Endothelial cell of umbilical vein (primary cell): ENCODE measurements at regions of chr11 and their contacts with region 1.

Region 1: DNA sequence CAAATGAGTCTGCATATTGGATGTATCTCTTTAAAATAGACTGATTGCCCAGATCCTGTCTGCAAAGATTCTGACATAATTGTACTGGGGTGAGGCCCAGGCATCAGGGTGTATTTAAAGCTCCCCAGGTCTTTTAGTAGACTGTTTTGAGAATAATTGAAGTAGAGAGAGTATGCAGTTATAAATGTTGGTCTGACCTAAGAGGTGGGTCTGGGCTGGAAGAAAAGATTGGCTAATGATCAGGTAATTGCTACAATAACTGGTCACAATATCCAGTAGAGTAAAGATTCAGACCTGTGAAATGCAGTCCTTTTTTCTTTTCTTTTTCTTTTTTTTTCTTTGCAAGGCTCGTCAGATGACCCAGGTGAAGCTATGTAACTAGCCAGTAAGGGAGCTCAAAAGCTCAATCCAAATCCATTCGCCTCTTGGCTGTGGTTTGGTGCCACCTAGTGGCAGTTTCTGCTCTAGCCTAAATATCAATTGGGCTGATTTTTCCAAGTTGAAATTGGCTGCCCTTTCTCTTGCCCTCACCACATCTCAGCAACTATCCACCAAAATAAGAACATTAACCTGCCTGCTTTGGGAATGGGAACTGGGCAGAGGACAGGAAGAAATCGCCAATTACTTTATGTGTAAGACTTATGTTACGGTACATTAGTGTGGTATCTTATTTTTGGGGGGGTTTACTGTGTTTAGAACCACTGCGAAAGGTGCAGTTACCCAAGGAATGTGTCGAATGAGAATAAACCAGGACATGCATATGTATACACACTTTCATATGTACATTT is 45.9 kb downstream of the ZNF143 start:
- DNase-seq: peak; percentile 84
- H3K4me3 ChIP-seq: no peak overlapping the region
- H3K27ac ChIP-seq: no peak overlapping the region
- H3K4me1 ChIP-seq: no peaks in the 10 kb centered on the region
- H3K27me3 ChIP-seq: no peaks in the 10 kb centered on the region
- CTCF ChIP-seq: peak; percentile 69 to 88
- POLR2A ChIP-seq: no peak

Region 2: GRCh38 chr11:8911029-8911826 is 595.5 kb before region 1 on chr11 and contains the start of gene AKIP1:
- CTCF ChIA-PET with region 1: interaction called, 16 read pairs
- POLR2A ChIA-PET with region 1: no interaction called
- dilution Hi-C with region 1: no loop called
- intact Hi-C with region 1: loop called (anchors 2 kb)
- DNase-seq: peak; percentile 98
- H3K4me3 ChIP-seq: peak within 1 kb of the TSS; percentile 63 to 95 (median 82)
- H3K27ac ChIP-seq: peak within 1 kb of the TSS; percentile 63
- H3K4me1 ChIP-seq: peaks cover 32% of the 10 kb centered on the region
- H3K27me3 ChIP-seq: no peaks in the 10 kb centered on the region
- CTCF ChIP-seq: no peak
- POLR2A ChIP-seq: peak; percentile 42
- total RNA-seq, gene AKIP1: 21.9 and 23.4 TPM in 2 replicates

Region 3: GRCh38 chr11:8934749-8935478 is 571.8 kb before region 1 on chr11:
- CTCF ChIA-PET with region 1: no interaction called
- POLR2A ChIA-PET with region 1: no interaction called
- dilution Hi-C with region 1: no loop called
- intact Hi-C with region 1: no loop called
- DNase-seq: no peak
- H3K4me3 ChIP-seq: no peak overlapping the region
- H3K27ac ChIP-seq: no peak overlapping the region
- H3K4me1 ChIP-seq: peaks cover 7% of the 10 kb centered on the region
- H3K27me3 ChIP-seq: no peaks in the 10 kb centered on the region
- CTCF ChIP-seq: no peak
- POLR2A ChIP-seq: no peak

Region 4: GRCh38 chr11:9137293-9138132 is 369.2 kb before region 1 on chr11:
- CTCF ChIA-PET with region 1: interaction called, 47 read pairs
- POLR2A ChIA-PET with region 1: no interaction called
- dilution Hi-C with region 1: no loop called
- intact Hi-C with region 1: no loop called
- DNase-seq: peak; percentile 85
- H3K4me3 ChIP-seq: no peak overlapping the region
- H3K27ac ChIP-seq: peak overlapping the region; percentile 75
- H3K4me1 ChIP-seq: peaks cover 37% of the 10 kb centered on the region
- H3K27me3 ChIP-seq: no peaks in the 10 kb centered on the region
- CTCF ChIP-seq: peak; percentile 90 to 99
- POLR2A ChIP-seq: no peak

Region 5: GRCh38 chr11:9448576-9449352 is 57.9 kb before region 1 on chr11:
- CTCF ChIA-PET with region 1: interaction called, 5 read pairs
- POLR2A ChIA-PET with region 1: no interaction called
- dilution Hi-C with region 1: no loop called
- intact Hi-C with region 1: loop called (anchors 5 kb)
- DNase-seq: no peak
- H3K4me3 ChIP-seq: no peak overlapping the region
- H3K27ac ChIP-seq: no peak overlapping the region
- H3K4me1 ChIP-seq: no peaks in the 10 kb centered on the region
- H3K27me3 ChIP-seq: no peaks in the 10 kb centered on the region
- CTCF ChIP-seq: no peak
- POLR2A ChIP-seq: no peak

Region 6: GRCh38 chr11:9479899-9480298 is 26.8 kb before region 1 on chr11:
- CTCF ChIA-PET with region 1: interaction called, 15 read pairs
- POLR2A ChIA-PET with region 1: no interaction called
- dilution Hi-C with region 1: no loop called
- intact Hi-C with region 1: no loop called
- DNase-seq: no peak
- H3K4me3 ChIP-seq: no peak overlapping the region
- H3K27ac ChIP-seq: no peak overlapping the region
- H3K4me1 ChIP-seq: no peaks in the 10 kb centered on the region
- H3K27me3 ChIP-seq: no peaks in the 10 kb centered on the region
- CTCF ChIP-seq: no peak
- POLR2A ChIP-seq: no peak

Region 7: GRCh38 chr11:9565822-9566560 is 59.3 kb after region 1 on chr11:
- CTCF ChIA-PET with region 1: interaction called, 17 read pairs
- POLR2A ChIA-PET with region 1: interaction called, 4 read pairs
- dilution Hi-C with region 1: no loop called
- intact Hi-C with region 1: no loop called
- DNase-seq: peak; percentile 99
- H3K4me3 ChIP-seq: no peak overlapping the region
- H3K27ac ChIP-seq: peak overlapping the region; percentile 96
- H3K4me1 ChIP-seq: peaks cover 31% of the 10 kb centered on the region
- H3K27me3 ChIP-seq: no peaks in the 10 kb centered on the region
- CTCF ChIP-seq: no peak
- POLR2A ChIP-seq: no peak

Region 8: GRCh38 chr11:9943386-9944110 is 436.9 kb after region 1 on chr11:
- CTCF ChIA-PET with region 1: no interaction called
- POLR2A ChIA-PET with region 1: no interaction called
- dilution Hi-C with region 1: no loop called
- intact Hi-C with region 1: no loop called
- DNase-seq: peak; percentile 54
- H3K4me3 ChIP-seq: no peak overlapping the region
- H3K27ac ChIP-seq: no peak overlapping the region
- H3K4me1 ChIP-seq: no peaks in the 10 kb centered on the region
- H3K27me3 ChIP-seq: no peaks in the 10 kb centered on the region
- CTCF ChIP-seq: no peak
- POLR2A ChIP-seq: no peak